Esophagus squamous epithelium (tissue), 5 donors: ENCODE measurements at regions of chr16 and their contacts with region 1.

Region 1: DNA sequence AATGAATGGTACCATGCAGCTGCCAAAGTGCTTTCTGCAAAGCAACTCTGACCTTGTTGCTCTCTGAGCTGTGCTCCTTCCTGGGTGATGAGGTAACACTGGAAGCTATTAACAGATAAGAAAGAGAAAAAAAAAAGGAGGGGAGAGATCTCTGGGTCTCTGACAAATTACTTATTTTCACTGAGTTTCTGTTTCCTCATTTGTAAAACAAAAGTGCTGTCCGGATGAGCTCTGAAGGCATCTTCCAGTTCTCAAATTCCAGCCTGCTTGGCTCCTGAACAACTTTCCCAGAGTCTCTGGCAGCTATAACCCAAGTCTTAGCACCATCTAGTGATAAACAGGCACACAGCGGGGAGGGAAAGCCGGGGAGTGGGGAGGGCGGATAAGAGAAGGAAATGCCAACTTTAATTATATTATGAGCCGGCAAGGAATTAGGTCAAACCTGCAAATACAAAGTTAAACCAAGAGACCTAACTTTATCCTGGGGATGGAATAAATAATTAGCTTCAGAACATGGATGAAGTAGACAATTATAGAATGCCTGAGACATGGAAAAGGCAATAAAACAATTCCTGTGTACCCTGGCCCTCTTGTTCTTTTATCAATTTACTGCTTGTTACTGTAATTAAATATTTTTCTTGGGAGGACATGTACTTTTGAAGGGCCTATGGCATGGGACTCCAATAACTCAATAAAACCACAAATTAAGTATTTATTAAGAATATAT is 61.3 kb upstream of the KIFC3 start:
- DNase-seq: no peak
- H3K4me3 ChIP-seq: no peak overlapping the region
- H3K27ac ChIP-seq: no peak overlapping the region
- H3K4me1 ChIP-seq: peaks cover 0 to 27% (median 13%) of the 10 kb centered on the region in 3 donors
- H3K27me3 ChIP-seq: no peaks in the 10 kb centered on the region
- CTCF ChIP-seq: peak in 4 of 6 experiments; percentile 48 to 61 (median 50)
- POLR2A ChIP-seq: no peak

Region 2: GRCh38 chr16:56657555-56658326 is 1205.9 kb before region 1 on chr16 and contains the start of gene MT1F:
- intact Hi-C with region 1: no loop called
- DNase-seq: no peak
- H3K4me3 ChIP-seq: peak within 1 kb of the TSS; percentile 43 to 71 (median 55)
- H3K27ac ChIP-seq: peak within 1 kb of the TSS; percentile 58 to 77 (median 72)
- H3K4me1 ChIP-seq: peaks cover 16 to 30% (median 16%) of the 10 kb centered on the region in 3 donors
- H3K27me3 ChIP-seq: peaks cover 0 to 68% (median 5%) of the 10 kb centered on the region in 4 donors
- CTCF ChIP-seq: peak in 1 of 6 experiments; percentile 10
- POLR2A ChIP-seq: peak in 1 of 4 donors; percentile 59
- total RNA-seq, gene MT1F: 2.8 to 4.2 (median 2.9) TPM in 3 of 4 donors, not detected in the other

Region 3: DNA sequence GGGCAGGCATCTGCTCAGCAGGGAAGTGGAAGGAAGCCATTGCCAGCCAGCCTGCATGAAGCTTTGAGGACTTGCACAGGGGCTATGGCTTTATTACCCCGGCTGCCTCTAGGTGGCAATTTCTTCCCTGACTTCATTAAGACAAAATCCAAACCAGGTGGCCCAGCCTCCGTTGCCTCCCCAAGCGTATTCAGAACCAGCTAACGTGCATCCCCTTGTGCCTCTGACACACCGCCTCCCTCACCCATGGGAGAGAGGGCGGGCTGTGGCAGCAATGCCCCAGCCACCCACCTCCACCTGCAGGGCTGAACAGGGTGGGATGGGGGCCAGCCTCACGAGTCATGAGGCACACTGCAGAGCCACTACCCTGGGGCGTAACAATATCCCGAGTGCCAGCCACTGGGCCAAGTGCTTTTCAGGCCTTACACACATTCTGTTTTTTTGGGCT is 68.1 kb before region 1 on chr16:
- intact Hi-C with region 1: loop called (anchors 5 kb)
- DNase-seq: no peak
- H3K4me3 ChIP-seq: no peak overlapping the region
- H3K27ac ChIP-seq: no peak overlapping the region
- H3K4me1 ChIP-seq: peaks cover 14 to 51% (median 14%) of the 10 kb centered on the region in 3 donors
- H3K27me3 ChIP-seq: no peaks in the 10 kb centered on the region
- CTCF ChIP-seq: peak in 5 of 6 experiments; percentile 40 to 67 (median 45)
- POLR2A ChIP-seq: no peak